Activated CD4-positive, alpha-beta T cell treated with anti-CD3 and anti-CD28 coated beads, Interleukin-2, amount 10 ng/mL, durations not matched to agents 24 days and 14 days (primary cell): ENCODE measurements at regions of chr4 and their contacts with region 1.

Region 1: GRCh38 chr4:118173956-118174725 is 139.9 kb downstream of the NDST3 start:
- DNase-seq: peak; percentile 66
- H3K4me3 Mint-ChIP-seq: peak overlapping the region; percentile 44
- H3K27ac Mint-ChIP-seq: peak overlapping the region; percentile 13
- H3K4me1 Mint-ChIP-seq: peaks cover 30% of the 10 kb centered on the region
- H3K27me3 Mint-ChIP-seq: no peaks in the 10 kb centered on the region

Region 2: GRCh38 chr4:118086344-118086743 is 87.8 kb before region 1 on chr4:
- intact Hi-C with region 1: loop called (anchors 5 kb)
- DNase-seq: no peak
- H3K4me3 Mint-ChIP-seq: no peak overlapping the region
- H3K27ac Mint-ChIP-seq: no peak overlapping the region
- H3K4me1 Mint-ChIP-seq: peaks cover 3% of the 10 kb centered on the region
- H3K27me3 Mint-ChIP-seq: no peaks in the 10 kb centered on the region

Region 3: DNA sequence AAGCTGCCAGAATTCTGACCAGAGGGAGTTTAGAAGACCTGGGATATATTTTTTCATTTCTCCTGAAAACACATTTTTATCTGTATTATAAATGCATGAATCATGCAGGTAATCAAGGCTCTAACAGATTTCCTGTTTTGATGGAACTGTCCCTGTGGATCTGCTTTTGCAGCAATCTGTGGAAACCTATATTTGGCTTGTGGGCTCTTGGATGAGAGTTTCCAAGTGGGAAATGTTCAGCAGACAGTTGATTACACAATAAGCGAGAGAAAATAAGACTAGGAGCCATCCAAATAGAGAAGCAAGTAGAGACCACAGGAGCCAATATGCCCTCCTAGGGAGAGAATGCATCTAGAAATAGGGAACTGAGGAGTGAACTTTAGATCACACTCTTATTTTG is 34.9 kb before region 1 on chr4:
- intact Hi-C with region 1: no loop called
- DNase-seq: no peak
- H3K4me3 Mint-ChIP-seq: no peak overlapping the region
- H3K27ac Mint-ChIP-seq: no peak overlapping the region
- H3K4me1 Mint-ChIP-seq: no peaks in the 10 kb centered on the region
- H3K27me3 Mint-ChIP-seq: peaks cover 3% of the 10 kb centered on the region

Region 4: DNA sequence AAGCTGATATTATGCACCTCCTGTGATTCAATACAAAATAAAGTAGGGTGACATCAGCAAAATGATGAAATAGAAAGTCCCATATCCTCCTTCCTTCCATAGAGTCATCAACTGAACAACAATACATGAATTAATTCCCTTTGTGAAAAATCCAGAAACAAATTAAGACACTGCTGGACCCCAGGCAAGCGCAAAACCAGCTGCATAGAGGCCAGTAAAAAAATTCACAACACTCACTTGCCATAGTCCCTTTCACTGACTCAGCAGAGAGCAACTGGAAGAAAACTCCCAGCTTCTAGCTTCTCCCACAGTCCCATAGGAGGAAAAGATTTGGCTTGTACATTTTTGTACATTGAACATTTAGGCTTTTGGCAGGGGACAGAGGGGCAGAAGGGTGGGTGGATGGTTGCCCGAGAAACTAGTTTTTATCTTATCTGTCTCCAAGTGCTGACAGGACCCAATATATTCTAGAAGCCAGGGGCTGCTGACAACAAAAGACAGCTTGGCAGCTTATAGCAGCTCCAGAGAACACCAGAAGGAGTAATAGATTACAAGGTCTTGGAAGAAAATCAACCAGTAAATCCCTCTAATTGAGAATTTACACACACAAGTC is 15.3 kb before region 1 on chr4:
- intact Hi-C with region 1: loop called (anchors 1 kb)
- DNase-seq: no peak
- H3K4me3 Mint-ChIP-seq: no peak overlapping the region
- H3K27ac Mint-ChIP-seq: no peak overlapping the region
- H3K4me1 Mint-ChIP-seq: peaks cover 2% of the 10 kb centered on the region
- H3K27me3 Mint-ChIP-seq: no peaks in the 10 kb centered on the region

Region 5: DNA sequence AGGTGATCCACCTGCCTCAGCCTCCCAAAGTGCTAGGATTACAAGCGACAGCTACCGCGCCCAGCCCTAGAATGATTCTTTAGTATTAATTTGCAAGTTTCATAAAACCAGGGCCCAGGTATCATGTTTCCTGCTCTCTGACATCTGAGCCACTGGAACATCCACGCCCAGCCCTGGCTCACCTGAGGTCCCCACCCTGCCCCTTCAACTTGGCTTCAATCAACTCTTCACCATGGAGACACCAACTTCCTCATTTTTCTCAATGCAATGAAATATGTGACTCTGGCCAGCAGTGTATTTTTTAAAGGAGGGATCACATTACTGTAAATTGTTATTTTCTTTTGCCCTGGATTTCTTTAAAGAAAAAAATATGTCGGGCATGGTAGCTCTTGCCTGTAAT is 174.7 kb after region 1 on chr4:
- intact Hi-C with region 1: no loop called
- DNase-seq: no peak
- H3K4me3 Mint-ChIP-seq: no peak overlapping the region
- H3K27ac Mint-ChIP-seq: no peak overlapping the region
- H3K4me1 Mint-ChIP-seq: peaks cover 10% of the 10 kb centered on the region
- H3K27me3 Mint-ChIP-seq: peaks cover 43% of the 10 kb centered on the region